Activated CD4-positive, alpha-beta T cell treated with anti-CD3 and anti-CD28 coated beads for 36 hours (primary cell): ENCODE measurements at regions of chr5 and their contacts with region 1.

Region 1: GRCh38 chr5:151659001-151659754 is 27.5 kb downstream of the SPARC start:
- DNase-seq: peak; percentile 91
- ATAC-seq: peak; percentile 97
- H3K4me3 Mint-ChIP-seq: no peak overlapping the region
- H3K27ac Mint-ChIP-seq: no peak overlapping the region
- H3K4me1 Mint-ChIP-seq: peaks cover 14% of the 10 kb centered on the region
- H3K27me3 Mint-ChIP-seq: peaks cover 1% of the 10 kb centered on the region

Region 2: DNA sequence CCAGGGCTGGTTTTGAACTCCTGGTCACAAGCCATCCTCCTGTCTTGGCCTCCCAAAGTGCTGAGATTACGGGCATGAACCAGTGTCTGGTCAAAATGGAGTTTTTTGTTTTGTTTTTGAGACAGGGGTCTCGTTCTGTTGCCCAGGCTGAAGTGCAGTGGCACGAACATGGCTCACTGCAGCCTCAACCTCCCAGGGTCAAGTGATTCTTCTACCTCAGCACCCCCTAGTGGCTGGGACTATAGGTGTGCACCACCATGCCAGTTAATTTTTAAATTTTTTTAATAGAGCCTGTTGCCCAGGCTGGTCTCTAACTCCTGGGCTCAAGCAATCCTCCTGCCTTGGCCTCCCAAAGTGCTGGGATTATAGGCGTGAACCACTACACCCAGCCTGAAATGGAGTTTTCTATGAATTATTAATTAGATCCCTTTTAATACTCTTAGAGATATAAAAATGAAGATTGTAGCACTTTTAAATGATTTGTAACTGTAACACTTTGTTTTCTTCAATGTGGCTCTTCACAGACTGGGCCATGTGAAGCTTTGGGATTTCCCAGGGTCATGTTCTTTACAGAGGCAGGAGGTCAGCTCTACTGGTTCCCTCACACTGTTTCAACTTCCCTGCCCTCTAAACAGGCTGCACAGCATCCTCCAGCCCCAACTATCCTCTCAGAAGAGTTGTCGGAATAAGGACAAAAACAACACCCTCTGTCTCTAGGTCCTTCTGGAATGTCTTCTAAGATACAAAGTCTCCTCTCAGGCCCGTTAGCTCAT is 60.2 kb after region 1 on chr5:
- CTCF ChIA-PET with region 1: interaction called, 6 read pairs
- POLR2A ChIA-PET with region 1: no interaction called
- intact Hi-C with region 1: loop called in 1 of 2 experiments (anchors 1 kb)
- DNase-seq: peak; percentile 59
- ATAC-seq: peak; percentile 36
- H3K4me3 Mint-ChIP-seq: no peak overlapping the region
- H3K27ac Mint-ChIP-seq: no peak overlapping the region
- H3K4me1 Mint-ChIP-seq: peaks cover 11% of the 10 kb centered on the region
- H3K27me3 Mint-ChIP-seq: no peaks in the 10 kb centered on the region

Region 3: DNA sequence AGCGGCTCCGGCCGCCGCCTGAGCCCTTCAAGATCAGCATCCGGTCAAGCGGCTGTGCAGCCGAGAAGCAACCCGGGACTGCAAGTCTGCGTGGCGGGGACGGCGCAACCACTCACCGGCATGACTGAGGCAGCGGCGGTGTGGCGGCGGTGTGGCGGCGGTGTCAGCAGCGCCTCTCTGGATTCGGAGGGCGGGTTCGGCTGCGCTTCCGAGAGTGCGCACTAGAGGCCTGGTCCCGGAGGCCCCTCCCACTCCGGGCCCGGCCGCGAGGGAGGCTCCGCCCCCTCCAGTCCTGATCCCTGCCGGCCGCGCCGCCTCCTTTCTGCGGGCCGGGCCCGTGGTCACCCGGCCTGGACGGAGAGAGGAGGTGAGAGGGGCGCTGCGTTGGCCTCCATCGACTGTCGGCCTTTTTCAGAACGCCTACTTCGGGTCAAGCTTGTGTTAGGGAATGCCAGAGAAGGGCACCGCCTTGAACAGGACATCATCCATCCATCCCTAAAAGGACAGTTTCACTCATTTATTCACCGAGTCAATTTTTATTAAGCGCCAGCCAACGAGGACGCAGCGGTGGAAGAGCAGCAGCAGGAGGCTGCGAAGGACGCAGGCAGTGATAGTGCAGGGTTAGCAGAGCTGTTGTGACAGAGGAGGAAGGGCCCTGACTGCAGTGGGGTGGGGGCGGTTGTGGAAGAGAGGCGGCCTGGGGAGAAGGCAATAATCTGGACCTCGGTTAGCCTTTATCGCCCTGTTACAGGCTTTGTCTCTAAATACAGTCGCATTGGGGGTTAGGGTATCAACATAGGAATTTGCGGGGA is 99.5 kb after region 1 on chr5 and contains the start of gene ATOX1:
- CTCF ChIA-PET with region 1: interaction called, 8 read pairs
- POLR2A ChIA-PET with region 1: no interaction called
- intact Hi-C with region 1: loop called in 1 of 2 experiments (anchors 5 kb)
- DNase-seq: peak; percentile 95
- ATAC-seq: peak; percentile 99
- H3K4me3 Mint-ChIP-seq: peak within 1 kb of the TSS; percentile 98
- H3K27ac Mint-ChIP-seq: peak within 1 kb of the TSS; percentile 98
- H3K4me1 Mint-ChIP-seq: peaks cover 33% of the 10 kb centered on the region
- H3K27me3 Mint-ChIP-seq: no peaks in the 10 kb centered on the region
- total RNA-seq, gene ATOX1: 74.8 to 85.9 TPM

Region 4: GRCh38 chr5:152349683-152350526 is 690.7 kb after region 1 on chr5:
- CTCF ChIA-PET with region 1: interaction called, 4 read pairs
- POLR2A ChIA-PET with region 1: no interaction called
- intact Hi-C with region 1: loop called in 1 of 2 experiments (anchors 5 kb)
- DNase-seq: peak; percentile 61
- ATAC-seq: no peak
- H3K4me3 Mint-ChIP-seq: no peak overlapping the region
- H3K27ac Mint-ChIP-seq: no peak overlapping the region
- H3K4me1 Mint-ChIP-seq: no peaks in the 10 kb centered on the region
- H3K27me3 Mint-ChIP-seq: peaks cover 2% of the 10 kb centered on the region